ENCODE measurements at regions of chr1 and their contacts with region 1.

Region 1: DNA sequence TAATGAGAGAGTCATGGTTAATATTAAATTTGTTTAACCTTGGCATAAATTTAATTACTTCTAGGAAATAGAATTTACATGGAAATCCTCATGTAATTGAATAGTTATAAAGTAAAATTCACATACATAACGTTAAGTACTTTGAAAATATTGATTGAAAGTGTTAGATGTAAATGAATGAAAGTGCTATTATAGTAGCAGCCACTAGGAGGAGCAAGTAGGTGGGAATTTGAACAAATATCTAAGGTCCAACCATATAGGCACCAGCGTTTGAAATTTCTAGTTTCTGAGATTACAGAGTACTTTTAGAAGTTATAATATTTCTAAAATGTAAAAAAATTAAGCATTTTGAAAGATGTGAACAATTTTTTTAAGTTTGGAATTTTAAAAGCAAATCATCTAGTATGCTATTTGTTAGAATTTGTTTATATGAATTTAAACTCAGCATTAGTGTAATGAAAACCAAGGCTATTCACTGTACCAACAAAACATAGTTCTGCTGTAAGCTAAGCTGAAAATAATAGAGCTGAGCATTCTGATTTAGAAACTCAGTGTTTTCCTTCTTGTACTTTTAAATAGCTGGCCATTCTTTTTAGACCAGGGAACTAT is 3.3 kb downstream of the B3GALT2 start:
- DNase-seq: no peak
- H3K4me3 Mint-ChIP-seq: peak overlapping the region; percentile 59
- H3K27ac Mint-ChIP-seq: no peak overlapping the region
- H3K4me1 Mint-ChIP-seq: peaks cover 21% of the 10 kb centered on the region
- H3K27me3 Mint-ChIP-seq: no peaks in the 10 kb centered on the region

Region 2: GRCh38 chr1:193456811-193457280 is 273.7 kb after region 1 on chr1:
- CTCF ChIA-PET with region 1: no interaction called
- POLR2A ChIA-PET with region 1: interaction called, 24 read pairs
- DNase-seq: no peak
- H3K4me3 Mint-ChIP-seq: no peak overlapping the region
- H3K27ac Mint-ChIP-seq: no peak overlapping the region
- H3K4me1 Mint-ChIP-seq: peaks cover 28% of the 10 kb centered on the region
- H3K27me3 Mint-ChIP-seq: no peaks in the 10 kb centered on the region

Measured in activated CD4-positive, alpha-beta memory T cell treated with anti-CD3 and anti-CD28 coated beads, Interleukin-2, amount 10 ng/mL, durations not matched to agents 7 days and 5 days (primary cell).